ENCODE measurements at regions of chr4 and their contacts with region 1.

Region 1: DNA sequence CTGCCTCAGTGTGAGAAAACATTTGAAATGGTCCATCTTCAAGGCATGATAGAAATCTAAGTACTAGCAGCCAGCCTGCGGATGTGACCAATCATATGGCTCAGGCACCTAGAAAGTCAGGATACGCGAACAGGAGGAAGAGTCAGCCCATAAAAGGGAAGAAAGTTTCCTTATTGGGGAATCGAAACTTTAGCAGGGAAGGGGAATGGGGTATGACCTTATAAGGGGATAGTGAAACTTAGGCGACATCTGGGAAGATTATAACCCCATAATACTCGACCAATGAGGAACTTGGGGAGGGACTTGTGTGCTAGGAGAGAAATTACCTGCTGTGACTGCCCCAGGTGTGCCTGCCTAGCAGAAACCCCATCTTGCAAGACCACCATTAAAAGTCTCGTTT is 26.2 kb upstream of the PYURF start:
- DNase-seq: no peak
- H3K4me3 ChIP-seq: no peak overlapping the region
- H3K4me3 Mint-ChIP-seq: no peak overlapping the region
- H3K27ac ChIP-seq: no peak overlapping the region
- H3K27ac Mint-ChIP-seq: peak overlapping the region in 1 of 7 donors; percentile 65
- H3K4me1 ChIP-seq: no peaks in the 10 kb centered on the region
- H3K4me1 Mint-ChIP-seq: no peaks in the 10 kb centered on the region
- H3K27me3 ChIP-seq: no peaks in the 10 kb centered on the region
- H3K27me3 Mint-ChIP-seq: peaks cover 0 to 1% (median 1%) of the 10 kb centered on the region in 3 donors
- CTCF ChIP-seq: no peak

Region 2: GRCh38 chr4:88591787-88592599 is 42.2 kb after region 1 on chr4 and contains the start of gene HERC3:
- intact Hi-C with region 1: no loop called
- DNase-seq: peak; percentile 88 to 92 (median 92)
- H3K4me3 ChIP-seq: peak within 1 kb of the TSS; percentile 76 to 82 (median 78)
- H3K4me3 Mint-ChIP-seq: peak within 1 kb of the TSS; percentile 95 to 97
- H3K27ac ChIP-seq: peak within 1 kb of the TSS; percentile 82 to 96
- H3K27ac Mint-ChIP-seq: peak within 1 kb of the TSS; percentile 90 to 97 (median 94)
- H3K4me1 ChIP-seq: peaks cover 18 to 22% of the 10 kb centered on the region in 2 donors
- H3K4me1 Mint-ChIP-seq: peaks cover 31% of the 10 kb centered on the region
- H3K27me3 ChIP-seq: no peaks in the 10 kb centered on the region
- H3K27me3 Mint-ChIP-seq: peaks cover 3 to 10% (median 6%) of the 10 kb centered on the region in 3 donors
- CTCF ChIP-seq: no peak
- polyA plus RNA-seq, gene HERC3: 30.5 to 36.9 (median 36.7) TPM

Region 3: DNA sequence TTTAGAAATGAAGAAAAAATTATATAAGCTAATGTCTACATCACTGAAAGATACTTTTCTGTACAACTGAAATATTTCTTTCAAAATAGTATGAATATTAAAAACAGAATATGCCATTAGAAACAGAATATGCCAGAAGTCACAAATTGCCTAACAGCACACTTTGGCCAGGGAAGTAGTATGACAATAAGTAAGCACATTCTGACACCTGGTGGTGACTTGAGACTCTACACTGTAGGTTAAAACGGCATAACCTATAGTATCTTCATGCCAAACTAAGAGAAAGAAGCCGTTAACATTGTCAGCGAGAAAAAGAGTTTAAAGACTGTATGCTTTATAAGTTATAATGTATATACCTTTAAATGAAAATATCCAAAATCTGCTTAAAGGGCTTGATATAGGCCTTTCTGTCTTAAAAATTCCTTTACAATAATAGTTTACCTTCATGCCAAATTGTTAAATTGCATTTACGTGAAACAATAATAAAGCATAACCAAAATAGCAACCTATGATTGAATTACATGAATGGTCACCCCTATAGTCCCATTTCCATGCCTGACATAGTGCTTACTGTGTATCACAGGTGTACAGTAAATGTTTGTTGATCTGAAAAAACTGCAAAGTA is 474.3 kb after region 1 on chr4:
- intact Hi-C with region 1: loop called in 1 of 2 experiments (anchors 10 kb)
- DNase-seq: peak; percentile 67 to 87 (median 77)
- H3K4me3 ChIP-seq: no peak overlapping the region
- H3K4me3 Mint-ChIP-seq: no peak overlapping the region
- H3K27ac ChIP-seq: no peak overlapping the region
- H3K27ac Mint-ChIP-seq: no peak overlapping the region
- H3K4me1 ChIP-seq: no peaks in the 10 kb centered on the region
- H3K4me1 Mint-ChIP-seq: peaks cover 5% of the 10 kb centered on the region
- H3K27me3 ChIP-seq: no peaks in the 10 kb centered on the region
- H3K27me3 Mint-ChIP-seq: no peaks in the 10 kb centered on the region
- CTCF ChIP-seq: peak; percentile 87

Measured in CD14-positive monocyte (primary cell).